ENCODE measurements at regions of chr6 and their contacts with region 1.

Region 1: GRCh38 chr6:11172501-11173332 is 59.8 kb downstream of the NEDD9 start:
- DNase-seq: peak; percentile 68
- ATAC-seq: peak; percentile 77
- H3K4me3 Mint-ChIP-seq: peak overlapping the region; percentile 42
- H3K27ac Mint-ChIP-seq: no peak overlapping the region
- H3K4me1 Mint-ChIP-seq: peaks cover 9% of the 10 kb centered on the region
- H3K27me3 Mint-ChIP-seq: no peaks in the 10 kb centered on the region
- CTCF ChIP-seq: peak; percentile 89

Region 2: GRCh38 chr6:11144393-11144851 is 28.3 kb before region 1 on chr6:
- CTCF ChIA-PET with region 1: interaction called, 9 read pairs
- POLR2A ChIA-PET with region 1: no interaction called
- intact Hi-C with region 1: loop called (anchors 1 kb)
- DNase-seq: peak; percentile 52
- ATAC-seq: peak; percentile 89
- H3K4me3 Mint-ChIP-seq: no peak overlapping the region
- H3K27ac Mint-ChIP-seq: no peak overlapping the region
- H3K4me1 Mint-ChIP-seq: peaks cover 13% of the 10 kb centered on the region
- H3K27me3 Mint-ChIP-seq: no peaks in the 10 kb centered on the region
- CTCF ChIP-seq: peak; percentile 85

Region 3: GRCh38 chr6:11198663-11199603 is 26.2 kb after region 1 on chr6:
- CTCF ChIA-PET with region 1: no interaction called
- POLR2A ChIA-PET with region 1: no interaction called
- intact Hi-C with region 1: no loop called
- DNase-seq: no peak
- ATAC-seq: no peak
- H3K4me3 Mint-ChIP-seq: no peak overlapping the region
- H3K27ac Mint-ChIP-seq: peak overlapping the region; percentile 47
- H3K4me1 Mint-ChIP-seq: peaks cover 14% of the 10 kb centered on the region
- H3K27me3 Mint-ChIP-seq: no peaks in the 10 kb centered on the region
- CTCF ChIP-seq: no peak

Region 4: DNA sequence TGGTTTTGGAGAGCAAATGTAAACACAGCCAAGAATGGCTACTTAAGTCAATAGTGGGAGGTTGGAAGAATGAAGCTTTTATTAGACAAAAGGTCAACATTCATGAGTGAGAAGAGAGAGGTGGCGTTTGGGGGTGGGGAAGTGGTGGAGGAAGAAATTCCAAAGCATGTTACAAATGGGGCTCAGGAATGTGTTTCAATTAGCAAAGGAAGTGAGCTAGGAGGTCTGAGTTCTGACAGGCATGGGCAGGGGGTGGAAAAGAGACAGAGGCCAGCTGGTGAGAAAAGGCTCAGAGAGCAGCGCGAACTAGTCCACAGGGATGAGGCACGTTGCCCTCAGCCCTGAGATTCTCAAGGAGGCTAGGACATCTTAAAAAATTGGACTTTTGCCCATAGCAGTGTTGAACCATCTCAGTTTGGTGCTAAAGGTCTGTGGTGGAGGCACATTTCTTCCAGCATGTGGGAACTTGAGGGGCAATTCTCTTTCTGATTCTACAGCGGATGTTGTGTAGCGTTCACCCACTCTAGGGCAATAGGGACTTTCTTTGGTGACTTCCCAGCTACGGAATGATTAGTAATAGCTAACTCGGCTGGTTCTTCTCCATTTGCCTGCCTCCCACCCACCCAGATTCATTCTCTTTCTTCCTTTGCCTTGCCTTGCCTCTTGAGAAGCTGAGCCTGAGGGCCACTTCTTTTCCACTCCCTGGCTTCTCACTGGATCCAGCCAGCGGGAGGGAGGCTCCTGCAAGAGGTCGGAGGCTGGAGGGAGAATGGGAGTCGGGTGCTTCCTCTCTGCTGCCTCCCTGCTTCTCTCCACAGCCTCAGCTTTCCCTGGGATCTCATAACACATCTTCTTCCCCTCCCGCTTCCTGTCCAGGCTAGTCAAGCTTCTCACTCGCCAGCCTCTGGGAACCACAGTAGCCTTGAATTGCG is 104.8 kb after region 1 on chr6:
- CTCF ChIA-PET with region 1: no interaction called
- POLR2A ChIA-PET with region 1: no interaction called
- intact Hi-C with region 1: loop called (anchors 2 kb)
- DNase-seq: no peak
- ATAC-seq: peak; percentile 69
- H3K4me3 Mint-ChIP-seq: peak overlapping the region; percentile 59
- H3K27ac Mint-ChIP-seq: peak overlapping the region; percentile 91
- H3K4me1 Mint-ChIP-seq: peaks cover 48% of the 10 kb centered on the region
- H3K27me3 Mint-ChIP-seq: no peaks in the 10 kb centered on the region
- CTCF ChIP-seq: no peak

Region 5: GRCh38 chr6:11324453-11325015 is 151.8 kb after region 1 on chr6:
- CTCF ChIA-PET with region 1: interaction called, 3 read pairs
- POLR2A ChIA-PET with region 1: no interaction called
- intact Hi-C with region 1: loop called (anchors 5 kb)
- DNase-seq: no peak
- ATAC-seq: peak; percentile 28
- H3K4me3 Mint-ChIP-seq: no peak overlapping the region
- H3K27ac Mint-ChIP-seq: peak overlapping the region; percentile 28
- H3K4me1 Mint-ChIP-seq: peaks cover 46% of the 10 kb centered on the region
- H3K27me3 Mint-ChIP-seq: no peaks in the 10 kb centered on the region
- CTCF ChIP-seq: no peak

Region 6: GRCh38 chr6:11460001-11460668 is 287.4 kb after region 1 on chr6:
- CTCF ChIA-PET with region 1: interaction called, 6 read pairs
- POLR2A ChIA-PET with region 1: interaction called, 7 read pairs
- intact Hi-C with region 1: loop called (anchors 1 kb)
- DNase-seq: peak; percentile 22
- ATAC-seq: peak; percentile 18
- H3K4me3 Mint-ChIP-seq: peak overlapping the region; percentile 80
- H3K27ac Mint-ChIP-seq: peak overlapping the region; percentile 96
- H3K4me1 Mint-ChIP-seq: peaks cover 78% of the 10 kb centered on the region
- H3K27me3 Mint-ChIP-seq: no peaks in the 10 kb centered on the region
- CTCF ChIP-seq: no peak

Region 7: DNA sequence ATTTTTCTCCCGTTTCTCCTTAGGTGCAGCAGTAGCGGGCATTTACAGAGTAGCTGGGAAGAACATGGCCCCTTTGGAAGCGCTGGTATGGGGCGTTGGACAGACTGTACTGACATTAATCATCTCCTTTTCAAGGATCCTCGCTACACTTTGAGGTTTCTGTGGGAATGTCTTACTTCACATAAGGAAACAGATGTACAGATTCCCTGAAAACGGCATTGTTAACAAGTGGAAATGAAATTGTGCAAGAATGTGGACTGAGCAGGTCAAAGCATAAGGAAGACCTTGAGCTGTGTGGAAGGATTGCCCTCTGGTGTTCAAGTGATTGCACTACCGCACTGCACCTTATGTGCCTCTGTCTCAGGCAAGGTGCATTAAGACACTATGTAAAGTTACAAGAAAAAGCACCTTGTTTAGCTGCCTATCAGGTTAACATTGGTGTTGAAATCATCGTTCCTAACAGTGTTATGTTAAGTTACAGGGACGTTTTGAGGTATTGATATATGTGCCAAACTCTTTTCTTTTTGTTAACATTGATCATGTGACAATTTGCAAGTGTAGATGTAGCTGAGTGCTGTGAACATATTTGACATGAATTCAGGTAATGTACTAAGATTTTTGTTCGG is 402.8 kb after region 1 on chr6:
- CTCF ChIA-PET with region 1: interaction called, 11 read pairs
- POLR2A ChIA-PET with region 1: no interaction called
- intact Hi-C with region 1: loop called (anchors 1 kb)
- DNase-seq: no peak
- ATAC-seq: peak; percentile 100
- H3K4me3 Mint-ChIP-seq: no peak overlapping the region
- H3K27ac Mint-ChIP-seq: no peak overlapping the region
- H3K4me1 Mint-ChIP-seq: peaks cover 2% of the 10 kb centered on the region
- H3K27me3 Mint-ChIP-seq: no peaks in the 10 kb centered on the region
- CTCF ChIP-seq: peak; percentile 73